Dorsolateral prefrontal cortex (tissue), 120 donors: ENCODE measurements at regions of chr17 and their contacts with region 1.

Region 1: GRCh38 chr17:385926-386876 is 33.6 kb upstream of the RPH3AL start:
- DNase-seq: peak in 8 of 10 donors; percentile 34 to 83 (median 64)
- H3K4me3 ChIP-seq: peak overlapping the region in 57 of 59 donors; percentile 26 to 66 (median 47)
- H3K27ac ChIP-seq: peak overlapping the region in 8 of 59 donors; percentile 15 to 53 (median 45)
- H3K27me3 ChIP-seq: peaks cover 0 to 6% (median 0%) of the 10 kb centered on the region in 45 donors
- CTCF ChIP-seq: peak; percentile 18 to 87 (median 64)

Region 2: GRCh38 chr17:143782-144281 is 242.4 kb before region 1 on chr17:
- intact Hi-C with region 1: loop called (anchors 2 to 5 kb)
- DNase-seq: peak; percentile 56 to 89 (median 70)
- H3K4me3 ChIP-seq: peak overlapping the region in 18 of 59 donors; percentile 8 to 50 (median 26)
- H3K27ac ChIP-seq: no peak overlapping the region
- H3K27me3 ChIP-seq: no peaks in the 10 kb centered on the region
- CTCF ChIP-seq: peak; percentile 66 to 98 (median 91)

Region 3: GRCh38 chr17:164303-165235 is 221.6 kb before region 1 on chr17:
- intact Hi-C with region 1: loop called in 1 of 2 experiments (anchors 2 kb)
- DNase-seq: peak; percentile 39 to 81 (median 72)
- H3K4me3 ChIP-seq: no peak overlapping the region
- H3K27ac ChIP-seq: peak overlapping the region in 2 of 59 donors; percentile 38 to 52
- H3K27me3 ChIP-seq: no peaks in the 10 kb centered on the region
- CTCF ChIP-seq: peak in 55 of 56 donors; percentile 40 to 87 (median 67)